ENCODE measurements at regions of chr6 and their contacts with region 1.

Region 1: DNA sequence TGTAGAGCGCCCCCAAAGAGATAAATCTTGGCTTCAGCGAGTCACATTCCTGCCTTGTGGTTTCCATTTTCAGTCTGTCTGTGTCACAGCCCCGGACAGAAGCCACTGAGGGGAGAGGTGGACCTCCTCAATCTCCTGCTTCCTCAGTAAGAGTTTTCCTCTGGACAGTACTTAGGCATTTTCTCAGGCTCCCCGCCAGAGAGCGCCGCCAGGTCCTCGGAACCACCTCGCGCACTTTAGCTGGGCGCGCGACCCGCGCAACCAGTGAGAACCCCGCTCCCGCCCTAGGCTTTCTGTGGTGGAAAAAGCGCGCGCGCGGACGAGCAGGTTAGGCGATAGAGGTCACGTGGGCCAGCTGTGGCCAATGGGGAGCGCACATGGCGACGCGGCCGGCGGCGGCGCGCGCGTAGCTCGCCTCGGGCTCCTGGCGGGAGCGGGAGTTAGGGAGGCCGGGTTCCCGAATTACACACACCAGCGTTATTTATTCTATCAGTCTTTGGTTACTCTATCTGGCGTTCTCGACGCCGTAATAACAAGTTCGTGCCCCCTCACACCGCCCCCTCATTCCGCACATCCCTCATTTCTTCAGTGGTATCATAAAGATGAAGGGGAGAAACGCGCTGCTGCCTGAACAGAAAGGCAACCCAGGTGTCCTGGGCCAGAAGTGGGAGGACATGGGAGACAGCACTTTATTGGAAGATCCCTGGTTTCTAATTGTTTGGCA is 19.4 kb downstream of the PXT1 start:
- DNase-seq: peak; percentile 99 to 100
- ATAC-seq: peak; percentile 99
- H3K4me3 ChIP-seq: peak overlapping the region; percentile 36 to 69
- H3K27ac ChIP-seq: peak overlapping the region; percentile 43 to 46
- H3K4me1 ChIP-seq: no peaks in the 10 kb centered on the region
- H3K27me3 ChIP-seq: no peaks in the 10 kb centered on the region

Region 2: GRCh38 chr6:36594029-36594815 is 171.0 kb after region 1 on chr6 and contains the start of gene SRSF3:
- intact Hi-C with region 1: loop called in 1 of 2 experiments (anchors 1 kb)
- DNase-seq: peak; percentile 98 to 99
- ATAC-seq: peak; percentile 99
- H3K4me3 ChIP-seq: peak within 1 kb of the TSS; percentile 88 to 98
- H3K27ac ChIP-seq: peak within 1 kb of the TSS; percentile 73 to 93
- H3K4me1 ChIP-seq: peaks cover 4 to 9% of the 10 kb centered on the region in 2 donors
- H3K27me3 ChIP-seq: no peaks in the 10 kb centered on the region
- total RNA-seq, gene SRSF3: 190 to 197 TPM